Astrocyte of the spinal cord (primary cell): ENCODE measurements at regions of chr11 and their contacts with region 1.

Region 1: DNA sequence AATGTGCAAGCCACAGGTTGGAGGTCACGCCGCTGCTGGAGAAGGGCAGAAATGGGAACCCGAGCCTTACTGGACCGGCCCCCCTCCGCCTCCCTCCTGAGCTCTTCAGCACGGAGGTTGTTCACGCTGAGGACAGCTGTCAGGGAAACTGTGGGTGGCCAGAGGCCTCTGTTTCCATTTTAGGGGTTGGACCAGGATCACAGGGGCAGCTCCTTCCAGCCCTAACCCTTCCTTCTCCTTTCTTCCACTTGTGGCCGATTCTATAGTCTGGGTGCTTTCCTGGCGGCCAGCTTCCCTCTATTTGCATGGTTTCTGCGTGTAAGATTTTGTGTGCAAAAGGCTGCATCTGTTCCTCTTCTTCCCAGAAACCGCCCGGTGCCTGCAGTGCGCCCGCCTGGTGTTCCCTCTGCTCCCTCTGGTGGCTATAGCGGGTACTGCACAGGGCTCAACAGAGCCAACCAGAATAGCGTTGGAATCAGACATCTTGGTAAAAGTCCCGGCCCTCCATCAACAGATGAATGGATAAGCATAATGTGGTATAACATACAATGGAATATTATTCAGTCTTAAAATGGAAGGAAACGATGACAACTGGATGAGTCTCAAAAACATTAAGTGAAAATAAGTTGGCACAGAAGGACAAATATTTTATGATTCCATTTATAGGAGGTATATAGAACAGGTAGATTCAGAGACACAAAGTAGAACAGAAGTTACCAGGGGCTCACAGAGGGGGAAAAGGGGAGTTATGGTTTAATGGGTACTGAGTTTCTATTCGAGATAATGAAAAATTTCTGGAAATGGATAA is 8.4 kb upstream of the SLC22A8 start:
- DNase-seq: peak; percentile 69
- H3K4me3 ChIP-seq: no peak overlapping the region
- CTCF ChIP-seq: peak; percentile 100

Region 2: DNA sequence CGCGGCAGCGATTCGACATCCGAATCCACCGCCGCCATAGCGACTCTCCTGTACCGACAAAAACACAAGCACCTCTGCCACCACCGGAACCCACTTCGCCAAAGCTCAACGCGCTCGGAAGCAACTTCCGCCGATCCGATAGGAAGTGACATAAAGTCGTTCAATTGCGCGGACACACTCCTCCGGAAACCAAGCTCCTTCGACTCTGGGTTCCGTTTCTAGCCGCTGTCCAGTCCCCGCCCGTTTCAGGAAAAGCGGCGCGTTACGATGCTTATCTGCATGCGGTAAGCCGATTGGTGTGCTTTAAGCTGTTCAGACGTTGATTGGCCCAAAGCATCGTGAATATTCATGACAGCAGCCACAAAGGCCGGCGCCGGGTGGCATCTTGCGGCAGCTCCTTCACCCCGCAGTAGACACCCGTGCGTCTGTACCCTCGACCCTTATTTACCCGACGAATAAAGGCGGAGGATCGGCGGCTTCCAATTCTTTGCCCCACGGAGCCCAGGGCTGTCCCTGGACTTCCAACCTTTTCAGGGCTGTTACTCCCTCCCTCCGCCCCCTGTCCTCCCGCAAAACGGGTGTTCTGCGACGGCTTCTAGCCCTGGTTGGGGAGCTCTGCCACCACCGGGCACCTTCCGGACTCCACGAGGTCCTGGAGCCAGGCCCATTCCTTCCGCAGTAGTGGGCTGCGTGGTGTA is 432.4 kb before region 1 on chr11 and contains the start of gene TUT1:
- in situ Hi-C with region 1: no loop called
- DNase-seq: peak; percentile 99
- H3K4me3 ChIP-seq: peak within 1 kb of the TSS; percentile 93
- CTCF ChIP-seq: no peak

Region 3: DNA sequence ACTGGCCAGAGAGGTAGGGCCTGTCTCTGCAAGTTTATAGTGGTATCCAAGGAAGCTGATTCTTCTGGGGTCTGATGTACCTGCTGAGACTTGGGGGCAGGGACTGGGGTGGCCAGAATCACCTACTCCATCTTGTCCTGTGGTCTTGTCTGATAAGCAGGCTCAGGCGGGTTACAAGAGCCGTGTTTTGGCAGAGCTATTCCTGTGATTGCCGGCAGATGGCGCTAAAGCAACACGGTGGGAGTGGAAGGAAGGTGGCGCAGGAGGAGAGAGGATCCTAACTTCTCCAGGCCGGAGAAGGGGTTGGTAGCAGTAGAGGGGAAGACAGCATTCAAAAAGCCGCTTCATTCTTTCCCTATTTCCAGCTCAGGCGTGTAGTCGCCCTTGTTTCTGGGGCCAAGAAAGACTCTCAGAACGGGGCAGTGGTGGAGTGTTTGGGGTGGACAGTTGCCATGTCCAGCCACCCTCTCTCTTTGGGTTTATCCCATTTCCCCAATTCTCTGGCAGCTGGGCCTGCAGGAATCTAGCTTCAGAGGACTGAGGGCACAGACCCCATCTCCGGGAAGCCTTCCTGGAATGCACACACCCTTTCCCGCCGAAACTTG is 118.0 kb before region 1 on chr11:
- in situ Hi-C with region 1: loop called (anchors 25 kb)
- DNase-seq: peak; percentile 81
- H3K4me3 ChIP-seq: no peak overlapping the region
- CTCF ChIP-seq: peak; percentile 100